Caco-2 (cell line): ENCODE measurements at regions of chr20 and their contacts with region 1.

Region 1: DNA sequence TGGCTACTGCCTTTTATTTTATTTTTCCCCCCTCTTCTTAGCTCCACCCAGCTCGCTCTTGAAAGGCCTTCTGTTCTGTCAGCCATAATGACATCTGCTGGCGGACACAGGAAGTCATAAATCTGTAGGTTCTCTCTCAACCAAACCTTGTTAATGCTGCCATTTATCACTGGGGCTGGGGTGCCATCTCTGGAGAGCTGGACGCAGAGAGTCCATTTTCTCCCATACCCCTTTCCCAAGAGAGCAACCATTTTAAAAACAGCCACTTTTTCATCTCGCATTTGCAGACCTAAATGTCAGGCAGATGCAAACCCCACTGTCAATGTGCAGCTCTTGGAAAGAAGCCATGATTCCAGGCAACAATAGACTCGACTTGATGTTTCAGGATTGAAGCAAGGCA is 13.0 kb upstream of the TSHZ2 start:
- DNase-seq: peak in 1 of 2 experiments; percentile 30
- H3K4me3 ChIP-seq: no peak overlapping the region
- H3K4me3 Mint-ChIP-seq: no peak overlapping the region
- H3K27ac Mint-ChIP-seq: no peak overlapping the region
- H3K4me1 ChIP-seq: no peaks in the 10 kb centered on the region
- H3K4me1 Mint-ChIP-seq: no peaks in the 10 kb centered on the region
- H3K27me3 ChIP-seq: no peaks in the 10 kb centered on the region
- H3K27me3 Mint-ChIP-seq: peaks cover 8% of the 10 kb centered on the region
- CTCF ChIP-seq: peak in 1 of 2 experiments; percentile 23

Region 2: GRCh38 chr20:52747845-52748284 is 211.3 kb before region 1 on chr20:
- CTCF ChIA-PET with region 1: interaction called, 16 read pairs
- POLR2A ChIA-PET with region 1: no interaction called
- intact Hi-C with region 1: loop called (anchors 2 kb)
- DNase-seq: peak in 1 of 2 experiments; percentile 26
- H3K4me3 ChIP-seq: no peak overlapping the region
- H3K4me3 Mint-ChIP-seq: no peak overlapping the region
- H3K27ac Mint-ChIP-seq: no peak overlapping the region
- H3K4me1 ChIP-seq: no peaks in the 10 kb centered on the region
- H3K4me1 Mint-ChIP-seq: no peaks in the 10 kb centered on the region
- H3K27me3 ChIP-seq: no peaks in the 10 kb centered on the region; the same call in 1 of the 2 replicates
- H3K27me3 Mint-ChIP-seq: peaks cover 18% of the 10 kb centered on the region
- CTCF ChIP-seq: peak; percentile 57 to 58

Region 3: DNA sequence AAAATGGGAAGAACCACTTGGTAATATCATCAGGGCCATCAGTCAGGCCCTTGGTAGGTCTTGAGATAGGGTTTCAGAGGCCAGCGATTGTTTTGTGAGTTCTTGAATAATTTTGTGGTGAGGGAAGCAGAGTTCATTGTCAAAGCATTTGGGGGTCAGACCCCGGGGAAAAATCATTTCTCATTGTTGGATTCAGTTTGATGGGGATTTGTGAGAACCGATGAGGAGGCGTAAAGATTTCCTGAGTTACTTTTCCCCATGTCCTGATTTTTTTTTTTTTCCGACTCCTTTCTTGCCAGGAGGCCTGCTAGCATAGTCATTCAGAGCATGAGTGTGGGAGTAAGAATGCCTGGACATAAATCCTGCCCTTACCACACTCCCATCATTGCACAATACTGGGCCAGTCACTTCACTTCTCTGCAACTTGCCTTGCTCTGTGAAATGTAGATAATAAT is 73.4 kb after region 1 on chr20:
- CTCF ChIA-PET with region 1: no interaction called
- POLR2A ChIA-PET with region 1: no interaction called
- intact Hi-C with region 1: no loop called
- DNase-seq: no peak
- H3K4me3 ChIP-seq: no peak overlapping the region
- H3K4me3 Mint-ChIP-seq: no peak overlapping the region
- H3K27ac Mint-ChIP-seq: no peak overlapping the region
- H3K4me1 ChIP-seq: no peaks in the 10 kb centered on the region
- H3K4me1 Mint-ChIP-seq: no peaks in the 10 kb centered on the region
- H3K27me3 ChIP-seq: peaks cover 1% of the 10 kb centered on the region; the same call in 1 of the 2 replicates
- H3K27me3 Mint-ChIP-seq: peaks cover 4% of the 10 kb centered on the region
- CTCF ChIP-seq: no peak